Mammary epithelial cell (primary cell): ENCODE measurements at regions of chr13 and their contacts with region 1.

Region 1: GRCh38 chr13:110340812-110341444 is 33.8 kb downstream of the COL4A2 start:
- DNase-seq: peak; percentile 53
- H3K4me3 ChIP-seq: no peak overlapping the region
- H3K27ac ChIP-seq: peak overlapping the region; percentile 51
- H3K4me1 ChIP-seq: peaks cover 52% of the 10 kb centered on the region
- H3K27me3 ChIP-seq: no peaks in the 10 kb centered on the region
- CTCF ChIP-seq: no peak

Region 2: DNA sequence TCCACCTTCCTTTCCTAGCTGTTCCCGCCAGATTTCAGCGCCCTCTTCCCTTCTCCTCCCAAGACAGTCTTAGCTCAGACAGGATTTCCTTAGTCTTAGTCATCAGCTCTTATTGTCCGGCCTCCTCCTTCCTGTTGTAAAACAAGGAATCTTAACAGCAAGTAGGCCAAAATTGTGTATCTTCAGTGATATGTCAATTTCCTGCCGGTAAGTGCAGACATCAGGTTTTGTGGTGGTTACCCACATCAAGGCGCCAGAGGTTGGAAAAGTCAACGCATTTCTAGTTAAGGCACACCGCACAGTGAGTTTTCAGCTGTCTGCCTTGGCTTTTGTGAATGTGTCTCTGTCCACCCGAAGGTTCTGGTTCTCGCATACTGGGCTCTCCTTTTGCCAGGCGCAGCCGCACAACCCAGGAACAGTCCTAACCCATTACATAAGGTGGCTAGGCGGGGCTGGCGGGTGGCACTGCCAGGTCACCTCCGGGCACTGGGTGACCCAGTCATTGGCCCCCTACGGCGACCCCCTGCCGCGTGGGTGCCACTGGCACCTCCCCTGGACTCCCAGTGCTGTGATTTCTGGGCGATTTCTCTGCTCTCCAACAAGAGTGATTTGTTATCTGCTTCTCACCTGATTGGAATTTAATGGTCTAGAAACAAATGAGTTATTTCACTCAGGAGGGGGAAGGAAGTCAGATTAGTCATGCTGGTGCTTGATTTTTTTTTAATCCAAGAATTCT is 21.0 kb before region 1 on chr13:
- CTCF ChIA-PET with region 1: no interaction called
- dilution Hi-C with region 1: no loop called
- in situ Hi-C with region 1: no loop called
- intact Hi-C with region 1: loop called (anchors 1 kb)
- DNase-seq: peak; percentile 78
- H3K4me3 ChIP-seq: peak overlapping the region; percentile 35 to 44 (median 38)
- H3K27ac ChIP-seq: peak overlapping the region; percentile 70
- H3K4me1 ChIP-seq: peaks cover 17% of the 10 kb centered on the region
- H3K27me3 ChIP-seq: no peaks in the 10 kb centered on the region
- CTCF ChIP-seq: no peak

Region 3: GRCh38 chr13:110396913-110397381 is 56.0 kb after region 1 on chr13:
- CTCF ChIA-PET with region 1: no interaction called
- dilution Hi-C with region 1: no loop called
- in situ Hi-C with region 1: loop called in 1 of 2 experiments (anchors 10 kb)
- intact Hi-C with region 1: loop called (anchors 2 kb)
- DNase-seq: peak; percentile 97
- H3K4me3 ChIP-seq: peak overlapping the region; percentile 7 to 16 (median 11)
- H3K27ac ChIP-seq: peak overlapping the region; percentile 81
- H3K4me1 ChIP-seq: peaks cover 24% of the 10 kb centered on the region
- H3K27me3 ChIP-seq: no peaks in the 10 kb centered on the region
- CTCF ChIP-seq: no peak

Region 4: DNA sequence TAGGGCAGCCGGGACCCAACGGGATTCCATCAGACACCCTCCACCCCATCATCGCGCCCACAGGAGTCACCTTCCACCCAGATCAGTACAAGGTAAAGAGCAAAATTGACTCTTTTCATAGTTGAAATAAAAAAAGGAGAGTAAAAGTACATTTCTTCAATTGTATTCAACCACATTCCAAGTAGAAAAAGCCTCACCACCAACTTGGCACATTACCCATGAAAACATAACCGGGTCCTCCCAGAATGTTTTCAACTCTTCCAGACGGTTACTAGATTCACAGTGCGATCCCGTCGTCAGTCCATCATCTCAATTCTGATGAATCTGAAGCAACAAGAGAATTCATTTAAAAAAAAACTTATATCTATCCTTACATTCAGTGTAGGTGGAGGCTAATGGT is 95.3 kb after region 1 on chr13:
- CTCF ChIA-PET with region 1: no interaction called
- dilution Hi-C with region 1: no loop called
- in situ Hi-C with region 1: no loop called
- intact Hi-C with region 1: no loop called
- DNase-seq: no peak
- H3K4me3 ChIP-seq: no peak overlapping the region
- H3K27ac ChIP-seq: no peak overlapping the region
- H3K4me1 ChIP-seq: peaks cover 1% of the 10 kb centered on the region
- H3K27me3 ChIP-seq: no peaks in the 10 kb centered on the region
- CTCF ChIP-seq: no peak